MCF 10A (cell line): ENCODE measurements at regions of chr1 and their contacts with region 1.

Region 1: GRCh38 chr1:186722711-186723309 is 42.6 kb upstream of the PTGS2 start:
- DNase-seq: peak; percentile 81
- H3K4me3 Mint-ChIP-seq: no peak overlapping the region
- H3K27ac Mint-ChIP-seq: no peak overlapping the region
- H3K4me1 Mint-ChIP-seq: no peaks in the 10 kb centered on the region
- H3K27me3 Mint-ChIP-seq: no peaks in the 10 kb centered on the region
- CTCF ChIP-seq: peak; percentile 67

Region 2: DNA sequence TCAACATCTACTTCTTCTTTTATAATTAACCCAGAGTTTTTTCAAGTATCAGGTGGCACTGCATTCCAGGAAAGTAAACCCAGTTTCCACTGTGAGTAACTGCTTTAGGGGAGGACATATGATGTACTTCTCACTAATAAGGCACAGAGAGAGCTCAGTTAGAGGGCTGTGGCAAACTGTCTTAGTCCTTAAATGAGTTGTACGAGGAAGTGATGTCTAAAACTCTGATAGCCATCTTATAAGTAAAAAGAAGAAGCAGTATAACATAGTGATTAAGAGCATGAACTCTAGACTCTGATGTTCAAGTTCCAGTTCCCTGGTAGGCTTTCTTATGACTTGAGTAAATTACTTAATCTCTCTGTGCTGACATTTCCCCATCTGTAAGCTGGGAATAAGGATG is 16.1 kb after region 1 on chr1:
- CTCF ChIA-PET with region 1: interaction called, 18 read pairs
- POLR2A ChIA-PET with region 1: interaction called, 3 read pairs
- intact Hi-C with region 1: no loop called
- DNase-seq: no peak
- H3K4me3 Mint-ChIP-seq: no peak overlapping the region
- H3K27ac Mint-ChIP-seq: no peak overlapping the region
- H3K4me1 Mint-ChIP-seq: peaks cover 7% of the 10 kb centered on the region
- H3K27me3 Mint-ChIP-seq: no peaks in the 10 kb centered on the region
- CTCF ChIP-seq: no peak

Region 3: GRCh38 chr1:186745531-186746146 is 22.8 kb after region 1 on chr1:
- CTCF ChIA-PET with region 1: interaction called, 10 read pairs
- POLR2A ChIA-PET with region 1: interaction called, 3 read pairs
- intact Hi-C with region 1: no loop called
- DNase-seq: no peak
- H3K4me3 Mint-ChIP-seq: no peak overlapping the region
- H3K27ac Mint-ChIP-seq: no peak overlapping the region
- H3K4me1 Mint-ChIP-seq: peaks cover 2% of the 10 kb centered on the region
- H3K27me3 Mint-ChIP-seq: no peaks in the 10 kb centered on the region
- CTCF ChIP-seq: no peak

Region 4: GRCh38 chr1:186806477-186806876 is 83.7 kb after region 1 on chr1:
- CTCF ChIA-PET with region 1: interaction called, 14 read pairs
- POLR2A ChIA-PET with region 1: interaction called, 4 read pairs
- intact Hi-C with region 1: no loop called
- DNase-seq: peak; percentile 58
- H3K4me3 Mint-ChIP-seq: no peak overlapping the region
- H3K27ac Mint-ChIP-seq: no peak overlapping the region
- H3K4me1 Mint-ChIP-seq: no peaks in the 10 kb centered on the region
- H3K27me3 Mint-ChIP-seq: no peaks in the 10 kb centered on the region
- CTCF ChIP-seq: no peak

Region 5: GRCh38 chr1:186828611-186829454 is 106.0 kb after region 1 on chr1 and contains the start of gene PLA2G4A:
- CTCF ChIA-PET with region 1: interaction called, 4 read pairs
- POLR2A ChIA-PET with region 1: no interaction called
- intact Hi-C with region 1: loop called (anchors 5 kb)
- DNase-seq: peak; percentile 89
- H3K4me3 Mint-ChIP-seq: peak within 1 kb of the TSS; percentile 97
- H3K27ac Mint-ChIP-seq: peak within 1 kb of the TSS; percentile 65
- H3K4me1 Mint-ChIP-seq: no peaks in the 10 kb centered on the region
- H3K27me3 Mint-ChIP-seq: no peaks in the 10 kb centered on the region
- CTCF ChIP-seq: no peak
- total RNA-seq, gene PLA2G4A: 2.1 and 3.8 TPM in 2 replicates

Region 6: GRCh38 chr1:186915555-186915954 is 192.7 kb after region 1 on chr1:
- CTCF ChIA-PET with region 1: interaction called, 11 read pairs
- POLR2A ChIA-PET with region 1: no interaction called
- intact Hi-C with region 1: loop called (anchors 10 kb)
- DNase-seq: no peak
- H3K4me3 Mint-ChIP-seq: no peak overlapping the region
- H3K27ac Mint-ChIP-seq: no peak overlapping the region
- H3K4me1 Mint-ChIP-seq: peaks cover 5% of the 10 kb centered on the region
- H3K27me3 Mint-ChIP-seq: no peaks in the 10 kb centered on the region
- CTCF ChIP-seq: no peak